ENCODE measurements at regions of chr6 and their contacts with region 1.

Region 1: DNA sequence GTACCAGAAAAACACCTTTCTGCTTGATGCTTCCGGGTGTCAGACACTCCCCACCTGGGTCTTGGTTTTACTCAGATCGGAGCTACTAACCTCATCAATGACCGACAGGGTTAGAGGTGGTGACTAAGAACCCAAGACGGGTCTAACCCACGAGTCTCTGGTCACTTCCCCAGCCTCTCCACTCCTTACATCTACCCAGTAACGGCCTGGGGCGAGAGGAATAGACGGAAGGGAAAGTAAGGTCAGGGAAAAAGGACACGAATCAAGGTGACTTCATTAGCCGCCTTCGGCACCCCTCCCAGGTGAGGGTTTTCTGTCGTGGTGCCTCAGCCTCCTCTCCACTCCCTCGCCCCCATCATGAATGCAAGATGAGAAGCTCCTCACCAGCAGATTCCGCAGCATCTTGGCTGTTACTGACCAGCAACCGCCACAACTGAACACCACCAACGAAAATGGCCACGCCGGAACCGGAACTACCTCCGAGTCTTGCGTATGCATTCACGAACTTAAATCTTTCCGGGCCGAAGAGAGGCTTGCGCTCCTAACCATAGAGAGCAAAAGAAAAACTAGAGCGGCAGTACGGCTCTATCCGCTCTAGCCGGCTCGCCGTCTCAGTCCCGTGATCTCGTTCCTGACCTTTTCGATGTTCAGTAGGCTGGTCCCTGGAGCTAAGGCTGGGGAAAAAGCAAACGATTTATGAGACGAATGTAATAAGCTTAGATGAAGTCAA is at the start of gene COX7A2:
- DNase-seq: peak; percentile 82 to 83
- H3K4me3 ChIP-seq: peak within 1 kb of the TSS; percentile 79 to 99 (median 96)
- H3K27ac ChIP-seq: peak within 1 kb of the TSS; percentile 86
- H3K4me1 ChIP-seq: no peaks in the 10 kb centered on the region; a peak in 1 of 7 replicates
- H3K27me3 ChIP-seq: no peaks in the 10 kb centered on the region
- CTCF ChIP-seq: no peak
- EP300 ChIP-seq: no peak
- POLR2A ChIP-seq: peak; percentile 78 to 93
- RAD21 ChIP-seq: no peak
- total RNA-seq, gene COX7A2: 456 and 468 TPM in 2 replicates

Region 2: GRCh38 chr6:75230484-75231325 is 12.8 kb before region 1 on chr6:
- CTCF ChIA-PET with region 1: interaction called, 6 read pairs
- POLR2A ChIA-PET with region 1: interaction called, 35 read pairs
- DNase-seq: no peak
- H3K4me3 ChIP-seq: no peak overlapping the region
- H3K27ac ChIP-seq: no peak overlapping the region
- H3K4me1 ChIP-seq: peaks cover 0 to 6% (median 4%) of the 10 kb centered on the region in 4 experiments; a peak in 3 of 7 replicates
- H3K27me3 ChIP-seq: peaks cover 0 to 1% (median 0%) of the 10 kb centered on the region in 4 experiments; a peak in 1 of 7 replicates
- CTCF ChIP-seq: peak; percentile 22 to 81 (median 49)
- EP300 ChIP-seq: no peak
- POLR2A ChIP-seq: no peak
- RAD21 ChIP-seq: peak; percentile 84 to 87

Region 3: DNA sequence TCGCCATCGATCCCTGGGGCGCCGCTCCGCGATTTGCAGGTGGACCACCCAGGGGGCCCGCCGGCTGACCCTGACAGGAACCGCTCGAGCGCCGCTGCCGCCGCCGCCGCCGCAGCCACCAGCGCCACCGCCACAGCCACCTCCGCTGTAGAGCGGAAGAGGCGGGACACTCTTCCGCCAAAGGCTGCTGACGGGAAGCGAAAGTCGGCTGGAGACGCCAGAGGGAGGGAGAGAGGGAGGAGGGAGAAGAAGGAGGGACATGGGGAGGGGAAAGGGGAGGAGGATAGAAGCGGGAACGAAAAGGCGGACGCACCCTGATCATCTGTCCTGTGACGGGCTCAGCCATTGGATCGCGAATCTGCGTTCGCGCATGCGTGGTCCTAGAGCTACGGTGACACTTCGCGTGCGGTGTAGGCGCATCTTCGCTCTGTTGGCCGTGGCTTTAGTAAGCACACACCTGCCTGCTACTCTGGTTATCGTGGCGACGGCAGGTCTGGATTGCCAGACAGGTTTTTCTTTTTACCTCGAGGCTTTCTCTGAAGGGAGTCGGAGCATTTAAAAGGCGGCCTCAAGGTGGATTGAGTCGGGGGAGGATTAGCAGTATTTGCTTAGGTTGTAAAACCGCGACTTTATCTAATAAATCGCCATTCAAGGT is 41.3 kb after region 1 on chr6 and contains the start of gene TMEM30A:
- CTCF ChIA-PET with region 1: no interaction called
- POLR2A ChIA-PET with region 1: interaction called, 10 read pairs
- DNase-seq: peak; percentile 93 to 98
- H3K4me3 ChIP-seq: peak within 1 kb of the TSS; percentile 74 to 99 (median 98)
- H3K27ac ChIP-seq: peak within 1 kb of the TSS; percentile 44; the same call in 1 of the 2 replicates
- H3K4me1 ChIP-seq: peaks cover 0 to 10% (median 0%) of the 10 kb centered on the region in 4 experiments; a peak in 2 of 7 replicates
- H3K27me3 ChIP-seq: no peaks in the 10 kb centered on the region
- CTCF ChIP-seq: no peak
- EP300 ChIP-seq: peak in 1 of 2 experiments; percentile 79; a peak in 1 of 3 replicates
- POLR2A ChIP-seq: peak; percentile 43 to 77
- RAD21 ChIP-seq: 0 out of 4 replicates have a peak, but pooled peaks of 1 of the 2 experiments have one; percentile 1
- total RNA-seq, gene TMEM30A: 65.8 and 71.0 TPM in 2 replicates